Naive thymus-derived CD4-positive, alpha-beta T cell (primary cell): ENCODE measurements at regions of chr6 and their contacts with region 1.

Region 1: DNA sequence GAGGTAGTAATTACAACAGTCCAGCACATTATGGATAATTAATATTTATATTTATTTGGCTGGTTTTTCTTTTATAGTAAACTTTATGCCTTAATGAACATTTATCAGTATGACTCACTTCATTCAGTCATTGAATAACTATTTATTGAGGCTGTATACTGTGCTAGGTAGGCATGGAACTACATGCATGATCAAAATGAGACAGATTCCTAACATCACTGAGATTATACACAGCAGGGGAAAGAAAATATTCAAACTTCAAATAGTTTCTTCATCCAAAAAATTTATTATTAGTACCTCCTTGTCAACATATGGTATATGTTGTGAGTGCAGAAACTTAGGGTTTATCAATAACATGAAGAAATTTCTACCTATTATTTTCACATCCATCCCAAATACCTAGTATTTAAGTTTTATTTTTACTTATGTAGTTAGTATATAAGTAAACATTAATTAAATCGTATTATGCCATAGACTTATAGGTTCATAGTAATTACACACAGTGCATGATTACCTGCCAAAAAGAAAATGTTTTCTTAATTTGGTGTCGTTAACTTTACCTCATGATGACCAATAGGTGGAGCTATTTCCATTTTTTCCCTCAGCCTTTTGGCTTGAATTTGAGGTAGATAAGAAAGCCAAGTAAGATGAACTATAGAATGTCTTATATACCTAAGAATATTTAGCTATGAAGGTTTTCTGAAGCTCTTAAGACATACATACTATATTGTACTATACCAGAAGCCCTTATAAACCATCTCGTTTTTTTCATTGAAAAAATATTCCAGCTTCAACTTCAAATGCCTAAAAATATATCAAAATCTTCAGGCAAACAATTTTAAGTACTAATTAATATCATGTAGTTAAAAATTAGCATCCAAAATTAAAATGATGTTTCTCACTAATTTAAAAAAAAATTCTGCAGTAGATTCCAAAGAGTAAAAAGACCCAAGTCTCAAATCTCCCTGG is 12.5 kb upstream of the TMEM30A start:
- DNase-seq: peak in 7 of 9 donors; percentile 16 to 65 (median 46)
- ATAC-seq: peak; percentile 75
- H3K4me3 ChIP-seq: no peak overlapping the region
- H3K4me3 Mint-ChIP-seq: no peak overlapping the region
- H3K27ac ChIP-seq: no peak overlapping the region
- H3K27ac Mint-ChIP-seq: no peak overlapping the region
- H3K4me1 ChIP-seq: no peaks in the 10 kb centered on the region
- H3K4me1 Mint-ChIP-seq: peaks cover 0 to 2% (median 0%) of the 10 kb centered on the region in 7 donors
- H3K27me3 ChIP-seq: no peaks in the 10 kb centered on the region
- H3K27me3 Mint-ChIP-seq: peaks cover 0 to 2% (median 0%) of the 10 kb centered on the region in 5 donors

Region 2: GRCh38 chr6:75266716-75267291 is 30.3 kb before region 1 on chr6:
- CTCF ChIA-PET with region 1: interaction called, 3 read pairs
- POLR2A ChIA-PET with region 1: no interaction called
- intact Hi-C with region 1: loop called in 1 of 2 experiments (anchors 1 kb)
- DNase-seq: peak in 7 of 9 donors; percentile 11 to 43 (median 27)
- ATAC-seq: peak; percentile 78
- H3K4me3 ChIP-seq: no peak overlapping the region
- H3K4me3 Mint-ChIP-seq: no peak overlapping the region
- H3K27ac ChIP-seq: no peak overlapping the region
- H3K27ac Mint-ChIP-seq: peak overlapping the region in 1 of 9 donors; percentile 32
- H3K4me1 ChIP-seq: peaks cover 0 to 5% of the 10 kb centered on the region in 2 donors
- H3K4me1 Mint-ChIP-seq: peaks cover 0 to 52% (median 41%) of the 10 kb centered on the region in 7 donors
- H3K27me3 ChIP-seq: no peaks in the 10 kb centered on the region
- H3K27me3 Mint-ChIP-seq: no peaks in the 10 kb centered on the region

Region 3: GRCh38 chr6:75278474-75279077 is 18.5 kb before region 1 on chr6:
- CTCF ChIA-PET with region 1: no interaction called
- POLR2A ChIA-PET with region 1: no interaction called
- intact Hi-C with region 1: no loop called
- DNase-seq: no peak
- ATAC-seq: peak; percentile 34
- H3K4me3 ChIP-seq: no peak overlapping the region
- H3K4me3 Mint-ChIP-seq: peak overlapping the region in 8 of 10 donors; percentile 1 to 64 (median 12)
- H3K27ac ChIP-seq: no peak overlapping the region
- H3K27ac Mint-ChIP-seq: peak overlapping the region in 4 of 9 donors; percentile 2 to 4 (median 3)
- H3K4me1 ChIP-seq: peaks cover 29 to 39% of the 10 kb centered on the region in 2 donors
- H3K4me1 Mint-ChIP-seq: peaks cover 35 to 76% (median 72%) of the 10 kb centered on the region in 7 donors
- H3K27me3 ChIP-seq: no peaks in the 10 kb centered on the region
- H3K27me3 Mint-ChIP-seq: no peaks in the 10 kb centered on the region

Region 4: DNA sequence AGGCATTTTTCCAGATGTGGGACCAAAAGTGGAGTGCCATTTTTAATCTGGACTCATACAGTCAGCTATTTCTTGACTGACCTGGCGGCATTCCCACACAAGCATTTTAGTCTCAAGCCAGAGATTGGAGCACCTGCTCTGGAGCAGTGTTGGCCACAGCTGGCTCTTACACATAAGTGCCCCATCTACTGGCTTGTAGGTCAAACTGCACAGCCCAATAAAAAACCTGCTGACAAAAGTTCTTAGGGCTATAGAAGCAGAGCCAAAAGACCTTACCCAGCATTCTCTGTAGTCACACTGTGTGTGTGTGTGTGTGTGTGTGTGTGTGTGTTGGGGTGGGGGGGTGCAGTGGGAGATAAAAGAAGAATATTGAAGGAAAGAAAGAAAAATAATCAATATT is 265.9 kb after region 1 on chr6:
- CTCF ChIA-PET with region 1: no interaction called
- POLR2A ChIA-PET with region 1: no interaction called
- intact Hi-C with region 1: loop called in 1 of 2 experiments (anchors 1 kb)
- DNase-seq: peak in 2 of 9 donors; percentile 2 to 11
- ATAC-seq: peak; percentile 58
- H3K4me3 ChIP-seq: no peak overlapping the region
- H3K4me3 Mint-ChIP-seq: no peak overlapping the region
- H3K27ac ChIP-seq: no peak overlapping the region
- H3K27ac Mint-ChIP-seq: no peak overlapping the region
- H3K4me1 ChIP-seq: no peaks in the 10 kb centered on the region
- H3K4me1 Mint-ChIP-seq: peaks cover 0 to 5% (median 0%) of the 10 kb centered on the region in 7 donors
- H3K27me3 ChIP-seq: no peaks in the 10 kb centered on the region
- H3K27me3 Mint-ChIP-seq: peaks cover 17 to 47% (median 43%) of the 10 kb centered on the region in 5 donors